ENCODE measurements at regions of chr1 and their contacts with region 1.

Region 1: GRCh38 chr1:221045842-221046831 is 166.9 kb downstream of the HLX start:
- H3K4me3 Mint-ChIP-seq: no peak overlapping the region
- H3K27ac Mint-ChIP-seq: peak overlapping the region; percentile 91
- H3K4me1 Mint-ChIP-seq: peaks cover 56% of the 10 kb centered on the region
- H3K27me3 Mint-ChIP-seq: no peaks in the 10 kb centered on the region

Region 2: DNA sequence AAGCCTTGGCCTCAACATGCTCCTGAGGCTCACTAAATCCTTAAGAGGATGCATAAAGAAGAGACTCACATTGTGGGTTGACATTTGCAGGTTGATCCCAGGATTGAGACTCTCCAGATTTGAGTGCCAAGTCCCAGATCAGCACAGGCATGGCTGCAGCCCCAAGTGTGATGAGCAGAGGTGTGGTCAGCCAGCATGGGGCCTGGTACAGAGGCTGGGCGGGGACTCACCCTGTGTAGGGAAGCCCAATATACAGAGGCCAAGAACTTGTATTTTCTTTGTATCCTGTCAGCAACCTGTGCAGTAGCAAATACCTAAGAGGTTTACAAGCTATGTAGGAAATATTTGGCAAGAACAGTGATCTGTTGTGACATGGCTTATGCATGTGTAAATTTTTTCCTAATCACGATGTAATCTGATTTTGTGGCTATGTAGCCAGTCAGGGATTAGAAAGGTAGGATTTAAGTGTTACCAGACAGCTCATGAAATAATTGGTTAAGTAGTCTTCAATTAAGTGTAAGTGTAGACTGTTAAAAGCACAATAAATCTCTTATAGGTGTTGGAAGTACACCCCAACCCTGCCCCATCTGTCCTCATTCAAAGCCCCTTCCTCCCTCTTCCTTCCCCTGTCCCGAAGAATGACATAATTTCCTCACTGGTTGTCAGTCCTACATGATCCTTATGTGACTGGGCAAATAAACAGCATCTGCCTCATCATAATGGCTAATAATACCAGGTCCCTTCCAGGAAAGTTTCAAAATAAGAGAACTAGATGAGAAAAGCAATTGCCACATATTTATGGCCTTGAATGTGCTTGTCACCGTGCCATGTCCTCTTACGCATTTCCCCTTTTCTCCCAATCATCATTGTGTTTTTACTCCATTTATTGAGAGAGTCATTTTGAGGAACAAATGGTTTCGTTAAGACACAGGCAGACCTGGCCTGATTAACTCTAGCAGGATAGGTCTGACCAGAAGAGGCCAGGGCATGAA is 46.0 kb before region 1 on chr1:
- intact Hi-C with region 1: loop called (anchors 2 kb)
- H3K4me3 Mint-ChIP-seq: no peak overlapping the region
- H3K27ac Mint-ChIP-seq: no peak overlapping the region
- H3K4me1 Mint-ChIP-seq: no peaks in the 10 kb centered on the region
- H3K27me3 Mint-ChIP-seq: peaks cover 23% of the 10 kb centered on the region

Measured in dendritic cell treated with granulocyte-macrophage colony-stimulating factor and Interleukin-4, amounts not matched to agents 40 ng/mL and 50 ng/mL, for 4 days (primary cell).